Activated CD4-positive, alpha-beta T cell treated with anti-CD3 and anti-CD28 coated beads for 36 hours (primary cell): ENCODE measurements at regions of chr16 and their contacts with region 1.

Region 1: DNA sequence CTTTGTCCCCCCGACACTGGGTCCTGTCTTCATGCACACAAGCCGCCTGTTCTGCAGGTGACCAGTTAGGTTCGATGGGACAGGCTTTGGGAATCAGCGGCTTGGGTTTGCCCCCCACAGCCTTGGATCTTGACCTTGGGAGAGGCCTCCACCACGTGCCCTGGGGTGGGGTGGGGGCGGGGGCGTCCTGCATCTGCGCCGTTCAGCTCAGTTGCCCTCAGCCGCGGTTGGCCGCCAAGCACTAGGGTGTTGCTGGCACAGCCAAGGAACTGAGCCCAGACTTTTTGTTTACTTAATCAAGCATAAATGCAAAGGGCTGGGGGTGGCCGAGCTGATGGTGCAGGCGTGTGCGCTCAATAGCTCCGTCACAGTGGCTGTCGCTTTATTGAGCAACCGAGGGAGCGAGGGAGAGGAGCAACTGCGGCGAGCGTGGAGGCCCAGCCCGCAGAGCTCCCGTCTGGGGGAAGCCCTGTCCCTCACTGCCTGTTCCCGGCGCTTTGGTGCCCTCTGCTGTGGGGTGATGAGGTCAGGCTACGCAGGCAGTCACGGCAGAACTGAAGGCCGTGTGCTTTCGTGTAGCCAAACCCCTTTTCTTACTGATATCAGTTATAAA is 33.9 kb downstream of the JPH3 start:
- DNase-seq: peak; percentile 93
- ATAC-seq: peak; percentile 93
- H3K4me3 Mint-ChIP-seq: peak overlapping the region; percentile 55
- H3K27ac Mint-ChIP-seq: no peak overlapping the region
- H3K4me1 Mint-ChIP-seq: peaks cover 12% of the 10 kb centered on the region
- H3K27me3 Mint-ChIP-seq: peaks cover 10% of the 10 kb centered on the region

Region 2: DNA sequence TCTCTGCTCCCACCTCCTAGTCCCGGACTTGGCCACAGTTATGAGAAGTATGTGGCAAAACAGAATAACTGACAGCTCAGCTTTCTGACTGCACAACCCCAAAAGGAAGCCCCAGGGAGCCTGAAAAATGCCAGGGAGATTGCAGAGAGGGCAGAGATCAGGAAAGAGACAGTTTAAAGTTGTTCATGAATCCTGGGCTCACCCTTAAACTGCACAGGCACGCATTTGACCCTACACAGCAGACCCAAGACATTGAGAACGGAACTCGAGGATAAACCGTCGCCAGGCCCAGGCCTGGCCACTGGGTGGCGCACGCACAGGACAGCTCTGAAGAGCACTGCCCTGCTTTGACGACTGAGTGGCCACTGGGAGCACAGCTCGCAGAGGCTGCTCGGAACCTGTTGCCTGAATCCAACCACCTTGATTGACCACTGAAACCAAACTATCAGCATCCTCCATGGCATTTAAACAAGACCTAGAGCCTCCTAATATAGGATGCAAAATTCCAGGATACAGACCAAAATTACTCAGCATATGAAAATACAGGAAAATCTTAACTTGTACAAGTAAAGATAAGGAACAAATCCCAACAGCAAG is 433.0 kb before region 1 on chr16:
- CTCF ChIA-PET with region 1: no interaction called
- POLR2A ChIA-PET with region 1: no interaction called
- intact Hi-C with region 1: loop called in 1 of 2 experiments (anchors 2 kb)
- DNase-seq: peak; percentile 79
- ATAC-seq: peak; percentile 83
- H3K4me3 Mint-ChIP-seq: no peak overlapping the region
- H3K27ac Mint-ChIP-seq: no peak overlapping the region
- H3K4me1 Mint-ChIP-seq: no peaks in the 10 kb centered on the region
- H3K27me3 Mint-ChIP-seq: peaks cover 8% of the 10 kb centered on the region

Region 3: DNA sequence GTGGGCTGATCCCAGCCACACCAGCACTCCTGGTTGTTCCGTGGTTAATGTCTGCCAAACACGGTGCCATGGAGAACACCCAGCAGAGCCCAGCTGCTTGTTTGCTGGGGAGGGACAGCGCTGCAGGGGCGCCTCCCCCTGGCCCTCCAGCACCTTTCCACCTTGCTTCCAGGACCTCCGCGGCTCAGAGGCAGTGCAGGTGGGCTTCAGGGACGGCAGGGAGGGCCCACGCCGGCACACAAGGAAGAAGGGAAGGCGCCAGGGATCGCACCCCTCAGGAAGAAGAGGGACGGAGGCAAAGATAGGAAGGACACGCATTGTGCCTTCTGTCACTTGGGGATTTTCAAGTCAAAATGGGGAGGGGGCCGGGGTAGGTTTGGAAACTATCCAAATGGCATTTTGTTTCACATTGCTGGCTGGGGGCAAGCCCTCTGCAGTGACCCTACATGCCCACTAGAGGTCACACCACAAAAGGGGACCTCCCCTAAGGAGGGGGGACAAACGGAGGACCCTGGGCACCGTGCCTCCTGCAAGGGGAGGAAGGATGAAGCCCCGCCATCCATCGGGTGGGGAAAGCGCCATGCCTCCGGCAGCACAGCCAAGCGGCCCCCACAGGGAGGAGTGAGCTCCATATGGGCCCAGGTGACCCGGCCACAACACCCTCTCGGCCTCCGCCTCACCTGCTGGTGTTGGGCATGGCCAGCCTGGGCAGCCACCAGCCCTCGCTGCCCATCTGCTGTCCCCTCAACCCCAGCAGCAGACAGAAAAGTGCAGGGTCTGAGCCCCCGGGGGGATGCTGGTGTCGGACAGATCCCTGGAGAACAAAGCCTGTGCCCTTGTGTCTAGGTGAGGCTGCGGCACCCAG is 311.5 kb before region 1 on chr16:
- CTCF ChIA-PET with region 1: interaction called, 4 read pairs
- POLR2A ChIA-PET with region 1: no interaction called
- intact Hi-C with region 1: loop called in 1 of 2 experiments (anchors 1 kb)
- DNase-seq: peak; percentile 56
- ATAC-seq: peak; percentile 79
- H3K4me3 Mint-ChIP-seq: no peak overlapping the region
- H3K27ac Mint-ChIP-seq: no peak overlapping the region
- H3K4me1 Mint-ChIP-seq: no peaks in the 10 kb centered on the region
- H3K27me3 Mint-ChIP-seq: no peaks in the 10 kb centered on the region

Region 4: GRCh38 chr16:87416826-87417527 is 219.2 kb before region 1 on chr16:
- CTCF ChIA-PET with region 1: interaction called, 16 read pairs
- POLR2A ChIA-PET with region 1: no interaction called
- intact Hi-C with region 1: loop called (anchors 1 kb)
- DNase-seq: peak; percentile 67
- ATAC-seq: no peak
- H3K4me3 Mint-ChIP-seq: no peak overlapping the region
- H3K27ac Mint-ChIP-seq: no peak overlapping the region
- H3K4me1 Mint-ChIP-seq: no peaks in the 10 kb centered on the region
- H3K27me3 Mint-ChIP-seq: no peaks in the 10 kb centered on the region

Region 5: GRCh38 chr16:87560428-87561199 is 75.6 kb before region 1 on chr16:
- CTCF ChIA-PET with region 1: interaction called, 12 read pairs
- POLR2A ChIA-PET with region 1: no interaction called
- intact Hi-C with region 1: no loop called
- DNase-seq: peak; percentile 64
- ATAC-seq: peak; percentile 92
- H3K4me3 Mint-ChIP-seq: no peak overlapping the region
- H3K27ac Mint-ChIP-seq: no peak overlapping the region
- H3K4me1 Mint-ChIP-seq: no peaks in the 10 kb centered on the region
- H3K27me3 Mint-ChIP-seq: peaks cover 8% of the 10 kb centered on the region

Region 6: GRCh38 chr16:87581833-87582203 is 54.4 kb before region 1 on chr16:
- CTCF ChIA-PET with region 1: interaction called, 12 read pairs
- POLR2A ChIA-PET with region 1: no interaction called
- intact Hi-C with region 1: loop called in 1 of 2 experiments (anchors 5 kb)
- DNase-seq: no peak
- ATAC-seq: no peak
- H3K4me3 Mint-ChIP-seq: no peak overlapping the region
- H3K27ac Mint-ChIP-seq: no peak overlapping the region
- H3K4me1 Mint-ChIP-seq: no peaks in the 10 kb centered on the region
- H3K27me3 Mint-ChIP-seq: peaks cover 19% of the 10 kb centered on the region